Left cardiac atrium (tissue), 4 donors: ENCODE measurements at regions of chr17 and their contacts with region 1.

Region 1: DNA sequence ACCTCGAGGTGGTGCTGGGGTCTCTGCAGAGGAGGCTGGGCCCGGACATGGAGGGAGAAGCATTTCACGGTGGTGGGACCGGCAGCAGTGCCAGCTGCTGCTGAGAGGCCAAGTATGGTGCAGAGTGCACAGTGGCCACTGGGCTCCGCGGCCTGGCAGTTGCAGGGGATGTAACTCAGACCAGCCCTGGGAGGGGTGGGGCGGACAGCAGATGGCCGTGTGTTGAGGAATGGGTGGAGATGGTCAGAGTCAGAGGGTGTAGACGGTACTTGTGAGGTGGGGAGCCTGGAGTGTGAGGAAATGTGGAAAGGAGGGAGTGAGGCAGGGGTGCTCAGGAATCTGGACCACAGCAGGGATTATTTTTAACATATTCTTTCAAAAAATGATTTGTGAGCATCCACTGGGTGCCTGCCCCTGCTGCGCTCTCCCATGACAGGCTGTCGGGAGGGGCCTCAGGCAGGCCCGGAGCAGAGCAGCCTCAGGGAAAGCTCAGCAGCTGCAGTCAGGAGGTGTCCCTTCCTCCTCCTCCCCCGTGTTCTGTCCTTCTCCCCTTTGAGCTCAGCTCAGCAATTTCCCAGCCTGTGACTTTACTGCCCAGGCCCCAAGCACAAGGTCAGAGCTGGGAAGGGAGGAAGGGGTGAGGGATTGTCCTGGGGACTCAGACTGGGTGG is 113.1 kb downstream of the RAP1GAP2 start:
- DNase-seq: no peak
- ATAC-seq: no peak

Region 2: GRCh38 chr17:2862197-2862596 is 47.1 kb before region 1 on chr17:
- intact Hi-C with region 1: loop called in 1 of 2 experiments (anchors 5 kb)
- DNase-seq: no peak
- ATAC-seq: no peak

Region 3: GRCh38 chr17:2949469-2950044 is 40.2 kb after region 1 on chr17:
- intact Hi-C with region 1: no loop called
- DNase-seq: peak; percentile 77
- ATAC-seq: peak; percentile 35 to 94

Region 4: GRCh38 chr17:2963307-2964026 is 54.2 kb after region 1 on chr17:
- intact Hi-C with region 1: no loop called
- DNase-seq: no peak
- ATAC-seq: no peak